ENCODE measurements at regions of chr20 and their contacts with region 1.

Region 1: GRCh38 chr20:45095753-45096371 is 5.1 kb downstream of the KCNS1 start:
- DNase-seq: no peak
- ATAC-seq: peak; percentile 65
- H3K4me3 Mint-ChIP-seq: no peak overlapping the region
- H3K27ac Mint-ChIP-seq: no peak overlapping the region
- H3K4me1 Mint-ChIP-seq: peaks cover 19% of the 10 kb centered on the region
- H3K27me3 Mint-ChIP-seq: peaks cover 29% of the 10 kb centered on the region
- CTCF ChIP-seq: peak; percentile 36

Region 2: DNA sequence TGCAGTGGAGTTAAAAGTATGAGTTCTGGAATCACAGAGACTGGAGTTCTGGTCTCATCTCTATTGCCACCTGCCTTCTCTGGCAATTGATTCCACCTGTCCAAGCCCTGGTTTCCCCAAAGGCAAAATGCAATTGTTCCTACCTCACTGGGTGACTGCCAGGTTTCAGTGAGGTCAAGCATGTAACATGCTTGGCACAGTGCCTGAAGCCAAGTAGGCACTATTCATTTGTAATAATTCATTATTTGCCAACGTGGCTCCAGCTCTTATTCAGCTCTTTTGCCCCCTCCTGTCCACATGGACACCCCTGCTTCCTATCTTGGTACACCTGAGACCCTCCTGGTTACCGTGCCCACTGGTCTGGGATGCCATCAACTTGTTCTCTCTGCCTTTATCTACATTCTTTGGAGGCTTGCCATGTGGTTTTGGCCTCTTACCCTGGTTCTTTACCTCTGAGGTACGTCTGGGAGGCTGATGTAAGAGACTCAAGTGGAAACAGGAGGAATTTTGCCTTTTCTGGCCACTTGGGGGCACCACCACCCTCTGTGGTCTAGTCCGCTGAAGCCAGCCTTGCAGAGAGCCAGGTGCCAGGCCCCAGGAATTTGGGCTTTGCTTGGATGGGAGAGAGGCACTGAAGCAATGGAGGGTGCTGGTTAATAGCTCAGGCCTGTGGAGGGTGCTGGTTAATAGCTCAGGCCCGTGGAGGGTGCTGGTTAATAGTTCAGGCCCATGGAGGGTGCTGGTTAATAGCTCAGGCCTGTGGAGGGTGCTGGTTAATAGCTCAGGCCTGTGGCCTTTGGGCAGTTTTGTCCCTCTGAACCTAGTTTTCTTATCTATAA is 348.5 kb before region 1 on chr20:
- CTCF ChIA-PET with region 1: no interaction called
- POLR2A ChIA-PET with region 1: no interaction called
- intact Hi-C with region 1: loop called (anchors 5 kb)
- DNase-seq: peak; percentile 32
- ATAC-seq: no peak
- H3K4me3 Mint-ChIP-seq: peak overlapping the region; percentile 25
- H3K27ac Mint-ChIP-seq: no peak overlapping the region
- H3K4me1 Mint-ChIP-seq: peaks cover 15% of the 10 kb centered on the region
- H3K27me3 Mint-ChIP-seq: peaks cover 36% of the 10 kb centered on the region
- CTCF ChIP-seq: no peak

Region 3: GRCh38 chr20:45044084-45044573 is 51.7 kb before region 1 on chr20:
- CTCF ChIA-PET with region 1: interaction called, 86 read pairs
- POLR2A ChIA-PET with region 1: interaction called, 3 read pairs
- intact Hi-C with region 1: loop called (anchors 1 kb)
- DNase-seq: no peak
- ATAC-seq: peak; percentile 93
- H3K4me3 Mint-ChIP-seq: no peak overlapping the region
- H3K27ac Mint-ChIP-seq: peak overlapping the region; percentile 1
- H3K4me1 Mint-ChIP-seq: peaks cover 68% of the 10 kb centered on the region
- H3K27me3 Mint-ChIP-seq: no peaks in the 10 kb centered on the region
- CTCF ChIP-seq: peak; percentile 38

Region 4: DNA sequence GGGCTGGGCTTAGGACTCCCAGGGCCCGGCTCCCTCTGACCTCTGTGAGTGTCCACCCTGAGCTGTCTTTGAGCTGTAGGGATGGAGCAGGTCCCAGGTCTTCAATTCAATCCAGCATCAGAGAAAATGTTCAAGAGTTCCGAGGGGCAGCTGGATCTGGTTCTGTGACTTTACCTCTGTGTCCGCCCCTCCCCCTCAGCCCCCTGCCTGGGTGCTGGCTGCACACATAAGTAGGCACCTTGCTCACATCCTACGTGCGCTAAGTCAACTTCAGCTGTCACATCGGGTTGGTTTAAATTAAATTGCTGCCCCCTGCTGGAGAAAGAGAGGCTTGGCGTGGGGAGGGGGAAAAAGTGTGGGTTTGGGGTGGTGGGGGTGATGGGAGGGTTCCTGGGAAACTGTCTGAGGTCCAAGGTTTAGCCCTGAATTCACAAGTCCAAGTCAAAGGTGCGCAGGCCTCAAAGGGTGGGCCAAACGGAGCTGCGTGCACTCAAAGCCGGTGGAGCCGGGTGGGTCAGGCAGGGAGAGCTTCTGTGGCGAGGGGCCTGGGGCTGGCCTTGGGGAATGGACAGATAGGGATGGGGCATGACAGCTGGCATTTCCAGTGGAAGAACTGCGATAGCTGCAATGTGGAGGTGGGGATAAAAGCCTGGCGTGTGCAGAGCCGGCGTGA is 16.1 kb after region 1 on chr20:
- CTCF ChIA-PET with region 1: interaction called, 16 read pairs
- POLR2A ChIA-PET with region 1: no interaction called
- intact Hi-C with region 1: no loop called
- DNase-seq: no peak
- ATAC-seq: no peak
- H3K4me3 Mint-ChIP-seq: no peak overlapping the region
- H3K27ac Mint-ChIP-seq: no peak overlapping the region
- H3K4me1 Mint-ChIP-seq: no peaks in the 10 kb centered on the region
- H3K27me3 Mint-ChIP-seq: peaks cover 9% of the 10 kb centered on the region
- CTCF ChIP-seq: no peak